Ascending aorta (tissue), 2 donors: ENCODE measurements at regions of chr6 and their contacts with region 1.

Region 1: GRCh38 chr6:5905431-5906339 is 101.0 kb downstream of the NRN1 start:
- DNase-seq: peak; percentile 53 to 90
- H3K4me3 ChIP-seq: peak overlapping the region in 1 of 2 donors; percentile 30
- H3K27ac ChIP-seq: peak overlapping the region in 1 of 2 donors; percentile 53
- H3K4me1 ChIP-seq: peaks cover 0 to 12% of the 10 kb centered on the region in 2 donors
- H3K27me3 ChIP-seq: no peaks in the 10 kb centered on the region
- CTCF ChIP-seq: no peak

Region 2: DNA sequence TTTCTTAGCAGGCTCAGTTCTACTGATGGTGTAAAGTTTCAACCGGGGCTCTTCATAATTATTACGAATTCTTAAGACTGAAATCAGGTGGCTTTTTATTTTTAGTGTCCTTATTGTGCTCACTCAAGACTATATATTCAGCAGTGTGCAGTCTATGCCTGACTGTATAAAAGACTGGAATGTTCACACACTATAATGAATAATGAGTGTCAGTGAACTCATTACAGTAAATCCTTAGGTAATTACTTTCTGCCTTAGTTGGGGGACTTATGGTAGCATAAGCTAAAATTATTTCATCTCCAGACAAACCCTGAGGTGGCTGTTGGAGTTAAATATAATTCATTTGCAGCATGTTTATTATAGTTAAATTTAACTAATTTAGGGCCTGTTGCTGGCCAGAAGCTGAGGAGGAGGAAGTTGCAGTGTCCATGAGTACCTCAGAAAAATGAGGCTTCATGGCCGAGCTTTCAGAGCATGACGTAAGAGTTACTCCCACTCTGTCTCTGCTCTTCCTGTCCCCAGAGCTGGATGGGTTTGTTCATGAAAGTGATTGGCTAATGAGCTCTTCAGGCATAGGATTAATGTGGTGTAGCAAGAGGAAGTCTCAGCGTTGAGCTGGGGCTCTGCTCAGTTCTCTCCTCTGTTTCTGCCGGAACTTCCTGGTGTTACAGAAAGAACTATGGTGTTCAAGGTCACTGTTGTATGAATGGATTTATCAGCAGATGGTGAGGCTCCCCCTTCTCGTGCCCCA is 234.7 kb before region 1 on chr6:
- intact Hi-C with region 1: loop called (anchors 5 kb)
- DNase-seq: no peak
- H3K4me3 ChIP-seq: no peak overlapping the region
- H3K27ac ChIP-seq: peak overlapping the region; percentile 74 to 80
- H3K4me1 ChIP-seq: peaks cover 12 to 15% of the 10 kb centered on the region in 2 donors
- H3K27me3 ChIP-seq: no peaks in the 10 kb centered on the region
- CTCF ChIP-seq: no peak

Region 3: DNA sequence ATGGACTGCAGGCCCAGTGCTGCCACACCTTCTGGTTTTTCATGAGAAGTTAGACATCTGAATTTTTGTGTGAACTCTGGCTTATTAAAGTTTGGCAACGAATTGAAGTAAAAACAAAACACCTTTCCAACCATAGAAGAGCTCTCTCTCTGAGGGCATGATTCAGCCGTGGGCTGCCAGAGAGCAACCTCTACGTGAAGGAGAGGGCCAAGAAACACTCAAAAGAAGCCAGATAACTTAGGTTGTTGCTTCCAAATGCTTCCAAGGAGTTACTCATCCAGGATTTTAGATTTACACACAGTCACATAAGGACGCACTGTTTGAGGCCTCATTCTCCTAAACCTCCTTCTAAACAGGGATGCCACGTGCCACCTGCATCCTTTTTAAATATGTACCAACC is 35.5 kb after region 1 on chr6:
- intact Hi-C with region 1: loop called (anchors 2 kb)
- DNase-seq: no peak
- H3K4me3 ChIP-seq: no peak overlapping the region
- H3K27ac ChIP-seq: peak overlapping the region; percentile 26 to 35
- H3K4me1 ChIP-seq: peaks cover 0 to 14% of the 10 kb centered on the region in 2 donors
- H3K27me3 ChIP-seq: no peaks in the 10 kb centered on the region
- CTCF ChIP-seq: no peak

Region 4: GRCh38 chr6:6003621-6004366 is 98.1 kb after region 1 on chr6:
- intact Hi-C with region 1: loop called (anchors 5 kb)
- DNase-seq: no peak
- H3K4me3 ChIP-seq: peak overlapping the region; percentile 35 to 43
- H3K27ac ChIP-seq: no peak overlapping the region
- H3K4me1 ChIP-seq: peaks cover 15 to 28% of the 10 kb centered on the region in 2 donors
- H3K27me3 ChIP-seq: peaks cover 58% of the 10 kb centered on the region
- CTCF ChIP-seq: no peak

Region 5: DNA sequence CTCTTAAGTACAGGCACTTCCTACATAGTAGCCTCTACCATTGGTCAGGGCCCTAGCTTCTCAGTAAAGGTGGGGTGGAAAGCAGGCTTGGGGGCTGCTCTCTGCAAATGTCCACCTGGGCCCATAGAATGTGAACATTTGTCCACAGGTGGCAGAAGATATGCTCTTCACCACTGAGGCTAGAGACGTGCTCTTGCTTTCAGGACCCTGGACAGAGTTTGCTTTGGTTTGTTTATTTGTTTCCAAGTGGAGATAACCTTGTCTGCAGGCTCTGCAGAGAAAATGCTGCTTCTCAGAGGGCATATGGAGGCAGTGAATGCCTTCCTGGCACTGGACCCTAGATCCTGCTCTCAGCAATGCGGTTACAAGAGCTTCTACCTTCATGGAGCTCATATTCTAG is 285.8 kb after region 1 on chr6:
- intact Hi-C with region 1: no loop called
- DNase-seq: no peak
- H3K4me3 ChIP-seq: no peak overlapping the region
- H3K27ac ChIP-seq: no peak overlapping the region
- H3K4me1 ChIP-seq: no peaks in the 10 kb centered on the region
- H3K27me3 ChIP-seq: no peaks in the 10 kb centered on the region
- CTCF ChIP-seq: no peak